MCF 10A (cell line): ENCODE measurements at regions of chr1 and their contacts with region 1.

Region 1: GRCh38 chr1:70410604-70411359 is at the start of gene CTH:
- DNase-seq: peak; percentile 97
- H3K4me3 Mint-ChIP-seq: peak within 1 kb of the TSS; percentile 99
- H3K27ac Mint-ChIP-seq: peak within 1 kb of the TSS; percentile 95
- H3K4me1 Mint-ChIP-seq: no peaks in the 10 kb centered on the region
- H3K27me3 Mint-ChIP-seq: no peaks in the 10 kb centered on the region
- CTCF ChIP-seq: no peak
- total RNA-seq, gene CTH: 3.4 TPM in 2 replicates

Region 2: GRCh38 chr1:70205434-70206118 is 205.2 kb before region 1 on chr1 and contains the start of gene LRRC40:
- CTCF ChIA-PET with region 1: interaction called, 3 read pairs
- POLR2A ChIA-PET with region 1: interaction called, 22 read pairs
- intact Hi-C with region 1: no loop called
- DNase-seq: peak; percentile 94
- H3K4me3 Mint-ChIP-seq: peak within 1 kb of the TSS; percentile 80
- H3K27ac Mint-ChIP-seq: peak within 1 kb of the TSS; percentile 98
- H3K4me1 Mint-ChIP-seq: peaks cover 40% of the 10 kb centered on the region
- H3K27me3 Mint-ChIP-seq: no peaks in the 10 kb centered on the region
- CTCF ChIP-seq: no peak
- total RNA-seq, gene LRRC40: 14.7 and 14.9 TPM in 2 replicates

Region 3: DNA sequence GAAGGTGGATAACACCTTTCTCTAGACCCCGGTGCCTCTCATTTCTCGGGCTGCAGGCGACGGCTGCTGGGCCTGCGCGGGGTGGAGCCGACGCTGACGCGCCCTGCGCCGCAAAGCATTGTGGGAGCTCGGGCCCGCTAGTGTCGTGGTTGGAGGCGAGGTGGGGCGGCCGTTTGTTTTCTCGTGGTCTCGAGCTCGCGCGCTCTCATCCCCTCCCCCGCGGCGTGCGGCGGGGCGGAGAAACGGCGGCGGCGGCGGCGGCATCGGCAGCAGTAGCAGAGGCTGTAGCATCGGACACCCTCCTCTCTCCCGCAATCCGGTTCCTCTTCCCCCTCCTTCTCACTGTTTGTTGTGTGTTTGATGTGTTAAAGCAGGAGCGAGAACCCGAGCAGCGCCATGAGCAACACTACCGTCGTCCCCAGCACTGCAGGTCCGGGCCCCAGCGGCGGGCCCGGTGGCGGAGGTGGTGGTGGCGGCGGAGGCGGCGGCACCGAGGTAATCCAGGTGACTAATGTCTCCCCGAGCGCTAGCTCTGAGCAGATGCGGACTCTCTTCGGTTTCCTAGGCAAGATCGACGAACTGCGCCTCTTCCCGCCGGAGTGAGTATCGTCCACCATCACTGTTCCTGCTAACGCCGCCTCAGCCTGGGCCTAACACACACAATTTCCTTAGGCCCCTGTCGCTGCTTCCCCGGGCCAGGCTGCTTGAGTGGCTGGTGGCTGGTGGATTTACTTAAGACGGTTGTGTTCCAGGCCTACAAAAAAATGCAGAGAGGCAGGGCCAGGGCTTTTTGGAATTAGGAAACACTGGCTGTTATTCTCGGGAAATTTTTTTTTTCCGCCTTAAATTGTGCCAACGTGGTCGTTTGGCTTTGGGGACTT is 189.3 kb before region 1 on chr1 and contains the start of gene SRSF11:
- CTCF ChIA-PET with region 1: interaction called, 3 read pairs
- POLR2A ChIA-PET with region 1: interaction called, 26 read pairs
- intact Hi-C with region 1: loop called (anchors 10 kb)
- DNase-seq: peak; percentile 93
- H3K4me3 Mint-ChIP-seq: peak within 1 kb of the TSS; percentile 78
- H3K27ac Mint-ChIP-seq: peak within 1 kb of the TSS; percentile 96
- H3K4me1 Mint-ChIP-seq: peaks cover 21% of the 10 kb centered on the region
- H3K27me3 Mint-ChIP-seq: no peaks in the 10 kb centered on the region
- CTCF ChIP-seq: no peak
- total RNA-seq, gene SRSF11: 209 and 218 TPM in 2 replicates

Region 4: GRCh38 chr1:70427976-70428375 is 17.2 kb after region 1 on chr1:
- CTCF ChIA-PET with region 1: interaction called, 3 read pairs
- POLR2A ChIA-PET with region 1: interaction called, 12 read pairs
- intact Hi-C with region 1: no loop called
- DNase-seq: no peak
- H3K4me3 Mint-ChIP-seq: no peak overlapping the region
- H3K27ac Mint-ChIP-seq: no peak overlapping the region
- H3K4me1 Mint-ChIP-seq: peaks cover 5% of the 10 kb centered on the region
- H3K27me3 Mint-ChIP-seq: no peaks in the 10 kb centered on the region
- CTCF ChIP-seq: no peak

Region 5: DNA sequence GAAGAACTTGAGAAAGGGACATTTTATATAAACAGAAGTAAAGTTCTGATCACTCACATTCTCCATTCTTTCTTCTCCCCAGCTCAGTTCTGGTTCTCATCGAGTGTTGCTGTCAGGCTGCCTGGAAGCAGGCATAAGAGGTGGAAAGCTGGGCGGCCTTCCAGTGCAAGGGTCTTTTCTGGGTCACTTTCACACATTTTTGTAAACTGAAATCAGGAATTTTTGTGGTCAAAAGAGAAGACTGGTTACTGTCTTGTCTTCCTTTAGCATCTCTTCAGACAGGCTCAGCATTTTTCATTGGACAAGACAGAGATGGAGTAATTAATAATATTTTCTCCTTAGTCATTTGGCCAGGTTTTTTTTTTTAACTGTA is 94.0 kb after region 1 on chr1:
- CTCF ChIA-PET with region 1: interaction called, 10 read pairs
- POLR2A ChIA-PET with region 1: no interaction called
- intact Hi-C with region 1: no loop called
- DNase-seq: no peak
- H3K4me3 Mint-ChIP-seq: no peak overlapping the region
- H3K27ac Mint-ChIP-seq: no peak overlapping the region
- H3K4me1 Mint-ChIP-seq: no peaks in the 10 kb centered on the region
- H3K27me3 Mint-ChIP-seq: no peaks in the 10 kb centered on the region
- CTCF ChIP-seq: no peak

Region 6: DNA sequence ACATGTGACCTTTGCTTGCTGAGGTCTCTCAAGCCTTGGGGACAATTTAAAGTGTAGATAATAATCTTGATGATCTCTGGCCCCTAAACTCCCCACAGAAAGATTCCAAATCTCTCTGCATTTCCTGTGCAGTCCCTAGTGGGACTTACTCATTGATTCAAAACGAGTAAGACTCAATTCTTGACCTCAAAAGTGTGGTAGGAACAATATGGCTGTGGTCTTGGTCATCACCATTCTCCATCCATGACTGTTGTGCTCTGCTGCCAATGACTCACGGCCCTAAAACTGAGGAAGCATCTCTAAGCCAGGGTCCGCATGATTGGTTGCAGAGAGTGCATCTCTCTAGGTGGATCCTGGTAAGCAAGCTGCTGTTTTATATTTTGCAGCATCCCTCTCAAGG is 368.8 kb after region 1 on chr1:
- CTCF ChIA-PET with region 1: no interaction called
- POLR2A ChIA-PET with region 1: no interaction called
- intact Hi-C with region 1: no loop called
- DNase-seq: no peak
- H3K4me3 Mint-ChIP-seq: no peak overlapping the region
- H3K27ac Mint-ChIP-seq: no peak overlapping the region
- H3K4me1 Mint-ChIP-seq: no peaks in the 10 kb centered on the region
- H3K27me3 Mint-ChIP-seq: peaks cover 19% of the 10 kb centered on the region
- CTCF ChIP-seq: no peak